ENCODE measurements at regions of chr6 and their contacts with region 1.

Region 1: DNA sequence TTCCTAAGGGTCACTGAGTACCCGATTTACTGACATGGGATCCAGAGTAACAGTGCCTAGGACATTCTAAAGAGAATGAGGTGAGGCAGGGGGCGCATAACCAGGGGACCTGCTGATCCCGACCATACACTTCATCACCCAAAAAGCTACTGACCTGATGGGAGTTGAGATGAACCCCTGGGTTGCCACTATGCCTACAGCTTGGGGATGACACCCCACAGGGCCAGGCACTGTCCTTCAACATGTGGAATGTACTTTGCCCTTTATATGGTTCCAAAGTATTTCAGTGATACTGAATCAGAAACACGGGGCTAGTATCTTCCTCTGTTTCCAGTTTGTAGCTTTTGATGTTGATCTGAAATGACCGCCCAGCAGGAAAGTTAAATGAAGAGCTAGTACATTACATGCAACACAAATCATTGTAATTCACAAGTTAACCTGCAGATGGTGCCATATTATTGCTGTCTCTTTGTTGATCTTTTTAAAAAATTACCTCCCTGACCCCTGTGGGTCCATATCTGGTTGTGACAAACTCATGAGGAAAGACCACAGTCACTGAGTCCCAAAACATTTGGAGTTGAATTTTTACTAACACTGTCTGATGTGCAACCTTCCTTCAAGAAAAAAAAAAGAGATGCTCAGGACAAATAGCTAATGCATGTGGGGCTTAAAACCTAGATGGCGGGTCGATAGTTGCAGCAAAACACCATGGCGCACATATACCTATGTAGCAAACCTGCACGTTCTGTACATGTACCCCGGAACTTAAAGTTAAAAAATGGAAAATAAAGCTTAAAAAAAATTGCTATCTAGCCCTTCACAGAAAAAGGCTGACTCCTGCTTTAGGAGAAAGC is 42.7 kb upstream of the GCNT2 start:
- H3K4me3 ChIP-seq: no peak overlapping the region
- H3K27ac ChIP-seq: no peak overlapping the region
- H3K4me1 ChIP-seq: no peaks in the 10 kb centered on the region
- CTCF ChIP-seq: no peak

Region 2: DNA sequence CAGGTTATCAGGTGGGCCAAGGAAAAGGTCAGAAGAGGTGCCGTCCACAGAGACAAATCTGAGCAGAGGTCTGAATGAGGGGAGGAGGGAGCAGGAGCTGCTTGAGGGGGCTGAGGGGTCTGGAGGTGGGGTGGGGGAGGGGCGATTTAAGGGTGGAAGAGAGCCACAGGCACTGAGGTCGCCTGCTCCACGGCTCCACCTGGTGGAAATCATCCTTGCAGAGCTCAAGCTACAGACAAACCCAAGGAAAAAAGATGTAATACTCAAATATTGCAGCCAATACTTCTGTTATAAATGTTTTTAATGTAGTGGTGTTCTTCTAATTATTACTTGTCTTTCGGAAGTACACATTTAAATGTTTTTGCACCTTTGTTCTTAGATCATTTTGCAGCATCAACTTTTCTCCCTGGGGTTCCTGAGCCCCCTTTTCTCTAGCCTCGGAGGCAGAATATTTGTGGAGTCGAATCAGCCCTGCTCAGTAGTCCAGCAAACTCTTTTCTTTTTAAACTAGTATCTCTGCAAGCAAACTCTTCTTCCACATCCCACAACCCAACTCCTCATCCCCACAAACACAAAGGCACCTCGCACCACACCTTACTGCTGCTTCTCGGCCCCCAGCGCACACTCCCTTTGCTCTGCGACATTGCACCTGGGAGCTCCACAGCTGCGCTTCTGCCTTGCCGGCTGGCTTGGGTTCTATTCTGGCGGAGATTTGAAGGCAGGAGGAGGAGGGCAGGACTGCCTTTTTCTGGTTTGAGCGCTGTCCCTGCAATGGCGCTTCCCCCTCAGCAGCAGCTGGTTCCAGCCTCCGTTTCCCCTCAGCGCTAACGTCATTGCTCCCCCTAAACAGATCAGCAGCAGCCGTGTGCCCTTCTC is 12.5 kb before region 1 on chr6:
- CTCF ChIA-PET with region 1: interaction called, 14 read pairs
- POLR2A ChIA-PET with region 1: no interaction called
- H3K4me3 ChIP-seq: no peak overlapping the region
- H3K27ac ChIP-seq: no peak overlapping the region
- H3K4me1 ChIP-seq: no peaks in the 10 kb centered on the region
- CTCF ChIP-seq: no peak

Region 3: GRCh38 chr6:10510592-10511367 is 32.4 kb after region 1 on chr6:
- CTCF ChIA-PET with region 1: interaction called, 18 read pairs
- POLR2A ChIA-PET with region 1: no interaction called
- H3K4me3 ChIP-seq: no peak overlapping the region
- H3K27ac ChIP-seq: no peak overlapping the region
- H3K4me1 ChIP-seq: peaks cover 6% of the 10 kb centered on the region; the same call in 1 of the 2 replicates
- CTCF ChIP-seq: peak; percentile 88

Region 4: DNA sequence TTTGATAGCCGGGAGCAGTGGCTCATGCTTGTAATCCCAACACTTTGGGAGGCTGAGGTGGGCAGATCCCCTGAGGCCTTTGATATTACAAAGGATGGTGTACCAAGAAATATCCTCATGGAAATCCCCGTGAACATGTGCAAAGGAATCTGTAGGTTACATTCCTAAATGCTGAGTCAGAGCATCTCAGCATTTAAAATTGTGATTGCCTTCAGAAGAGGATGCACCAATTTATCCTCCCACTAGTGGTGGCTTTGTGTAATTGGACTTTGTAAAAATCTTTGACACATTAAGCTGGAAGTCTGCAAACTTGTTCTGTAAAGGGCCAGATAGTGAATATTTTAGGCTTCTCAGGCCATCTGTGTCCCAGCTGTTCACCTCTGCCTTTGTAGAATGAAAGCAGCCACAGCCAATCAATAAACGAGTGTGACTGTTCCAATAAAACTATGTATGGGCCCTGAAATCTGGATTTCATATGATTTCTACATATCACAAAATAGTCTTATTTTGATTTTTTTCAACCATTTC is 281.0 kb after region 1 on chr6:
- CTCF ChIA-PET with region 1: interaction called, 11 read pairs
- POLR2A ChIA-PET with region 1: no interaction called
- H3K4me3 ChIP-seq: no peak overlapping the region
- H3K27ac ChIP-seq: no peak overlapping the region
- H3K4me1 ChIP-seq: no peaks in the 10 kb centered on the region
- CTCF ChIP-seq: no peak

Region 5: DNA sequence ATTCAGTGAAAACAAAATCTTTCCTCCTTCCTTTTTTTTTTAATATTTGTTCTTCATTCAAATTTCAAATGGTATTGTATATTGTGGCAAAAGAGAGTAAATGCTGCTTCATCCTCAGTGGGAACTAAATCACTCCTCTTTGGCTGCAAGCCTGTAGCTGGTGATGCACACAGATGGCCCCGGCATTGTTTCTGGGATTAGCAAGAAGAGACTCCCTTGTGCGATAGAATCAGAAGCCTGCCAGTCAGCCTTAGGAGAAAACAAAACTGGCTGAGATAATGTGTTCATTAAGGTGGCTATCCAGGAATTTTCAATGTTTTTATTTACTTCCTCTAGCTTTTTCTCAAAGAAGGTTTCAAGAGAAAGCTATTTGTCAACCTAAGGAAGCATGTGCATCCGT is 586.4 kb after region 1 on chr6:
- CTCF ChIA-PET with region 1: interaction called, 14 read pairs
- POLR2A ChIA-PET with region 1: no interaction called
- H3K4me3 ChIP-seq: no peak overlapping the region
- H3K27ac ChIP-seq: no peak overlapping the region
- H3K4me1 ChIP-seq: 0 out of 2 replicates have a peak, but pooled peaks cover 2% of the 10 kb centered on the region
- CTCF ChIP-seq: no peak

Measured in HEK293 (cell line).